Caco-2 (cell line): ENCODE measurements at regions of chr11 and their contacts with region 1.

Region 1: DNA sequence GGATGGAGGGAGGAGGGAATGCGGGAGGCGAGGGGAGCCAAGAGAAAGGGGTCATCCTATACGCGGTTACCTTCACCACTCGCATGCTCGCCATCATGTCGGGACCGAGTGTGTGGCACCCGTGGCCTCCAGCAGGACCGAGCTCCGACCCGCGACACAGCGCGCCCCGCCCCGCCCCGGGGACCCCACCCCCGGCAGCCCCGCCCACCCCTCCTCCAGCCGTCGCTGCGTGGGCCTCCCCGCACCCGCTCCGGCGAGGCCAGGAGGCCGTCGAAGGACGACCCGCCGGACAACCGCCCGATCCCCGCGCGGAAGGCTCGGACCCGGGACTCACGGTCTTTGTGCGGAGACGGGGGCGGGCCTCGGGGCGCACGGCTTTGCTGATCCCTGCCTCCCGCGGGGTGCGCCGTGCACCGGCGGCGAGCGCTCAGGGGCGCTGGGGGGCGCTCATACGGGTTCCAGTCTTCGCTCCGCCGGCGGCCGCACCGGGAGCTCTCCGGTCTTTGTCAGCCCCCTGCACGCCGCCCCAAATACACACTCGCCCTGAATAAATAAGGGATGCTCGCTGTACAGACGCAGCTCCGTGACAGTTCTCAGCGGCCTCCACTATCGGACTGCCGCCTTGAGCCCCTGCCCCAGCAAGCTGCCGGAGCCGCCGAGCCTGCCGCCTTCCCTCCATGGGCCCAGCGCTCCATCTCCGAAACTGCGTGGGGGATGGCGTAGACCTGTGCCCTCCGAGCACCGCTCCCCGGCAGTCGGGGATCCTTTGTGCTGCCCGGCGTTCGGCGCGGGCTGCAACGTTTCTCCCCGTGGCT is at the start of gene UBE2L6:
- DNase-seq: peak; percentile 55 to 67
- H3K4me3 ChIP-seq: peak within 1 kb of the TSS; percentile 54
- H3K4me3 Mint-ChIP-seq: peak within 1 kb of the TSS; percentile 96
- H3K27ac Mint-ChIP-seq: peak within 1 kb of the TSS; percentile 40
- H3K4me1 ChIP-seq: peaks cover 10% of the 10 kb centered on the region; the same call in 1 of the 2 replicates
- H3K4me1 Mint-ChIP-seq: peaks cover 14% of the 10 kb centered on the region
- H3K27me3 ChIP-seq: no peaks in the 10 kb centered on the region
- H3K27me3 Mint-ChIP-seq: no peaks in the 10 kb centered on the region
- CTCF ChIP-seq: peak in 1 of 2 experiments; percentile 49
- total RNA-seq, gene UBE2L6: 16.7 and 20.2 TPM in 2 replicates

Region 2: DNA sequence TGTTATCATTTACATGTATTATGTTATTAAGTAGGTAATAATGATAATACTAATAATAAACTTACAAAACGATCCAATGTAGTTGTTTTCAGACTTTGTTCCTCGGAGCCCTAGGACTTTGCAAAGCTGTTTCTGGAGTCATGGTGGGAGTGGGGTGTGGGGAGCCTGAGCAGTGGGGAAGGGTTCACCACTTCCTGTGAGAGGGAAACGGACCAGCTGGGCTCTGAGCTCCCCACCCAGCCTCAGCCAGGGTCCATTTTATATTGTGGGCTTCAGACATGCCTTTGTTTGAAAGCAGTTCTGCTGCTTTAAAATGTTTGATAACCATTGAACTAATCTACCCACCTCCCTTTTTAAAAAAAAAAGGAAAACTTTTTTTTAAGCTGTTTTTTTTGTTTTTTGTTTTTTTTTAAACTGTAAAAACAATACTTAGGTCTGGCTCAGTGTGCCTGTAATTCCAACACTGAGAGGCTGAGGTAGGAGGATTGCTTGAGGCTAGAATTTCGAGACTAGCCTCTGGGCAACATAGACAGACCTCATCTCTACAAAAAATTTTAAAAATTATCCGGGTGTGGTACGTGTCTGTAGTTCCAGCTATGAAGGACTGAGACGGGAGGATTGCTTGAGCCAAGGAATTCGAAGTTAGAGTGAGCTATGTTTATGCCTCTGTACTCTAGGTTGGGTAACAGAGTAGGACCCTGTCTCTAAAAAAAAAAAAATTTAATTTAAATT is 36.7 kb after region 1 on chr11:
- CTCF ChIA-PET with region 1: interaction called, 9 read pairs
- POLR2A ChIA-PET with region 1: no interaction called
- intact Hi-C with region 1: loop called (anchors 1 kb)
- DNase-seq: no peak
- H3K4me3 ChIP-seq: no peak overlapping the region
- H3K4me3 Mint-ChIP-seq: no peak overlapping the region
- H3K27ac Mint-ChIP-seq: no peak overlapping the region
- H3K4me1 ChIP-seq: no peaks in the 10 kb centered on the region
- H3K4me1 Mint-ChIP-seq: peaks cover 4% of the 10 kb centered on the region
- H3K27me3 ChIP-seq: no peaks in the 10 kb centered on the region; the same call in 1 of the 2 replicates
- H3K27me3 Mint-ChIP-seq: peaks cover 3% of the 10 kb centered on the region
- CTCF ChIP-seq: no peak